GM12878 (cell line): ENCODE measurements at regions of chr15 and their contacts with region 1.

Region 1: GRCh38 chr15:81286621-81287121 is 37.3 kb downstream of the STARD5 start:
- DNase-seq: no peak
- ATAC-seq: peak; percentile 33
- H3K4me3 ChIP-seq: no peak overlapping the region
- H3K27ac ChIP-seq: peak overlapping the region; percentile 29; the same call in 1 of the 2 replicates
- H3K4me1 ChIP-seq: peaks cover 38% of the 10 kb centered on the region
- H3K27me3 ChIP-seq: no peaks in the 10 kb centered on the region
- CTCF ChIP-seq: no peak
- EP300 ChIP-seq: no peak
- POLR2A ChIP-seq: no peak
- RAD21 ChIP-seq: no peak

Region 2: DNA sequence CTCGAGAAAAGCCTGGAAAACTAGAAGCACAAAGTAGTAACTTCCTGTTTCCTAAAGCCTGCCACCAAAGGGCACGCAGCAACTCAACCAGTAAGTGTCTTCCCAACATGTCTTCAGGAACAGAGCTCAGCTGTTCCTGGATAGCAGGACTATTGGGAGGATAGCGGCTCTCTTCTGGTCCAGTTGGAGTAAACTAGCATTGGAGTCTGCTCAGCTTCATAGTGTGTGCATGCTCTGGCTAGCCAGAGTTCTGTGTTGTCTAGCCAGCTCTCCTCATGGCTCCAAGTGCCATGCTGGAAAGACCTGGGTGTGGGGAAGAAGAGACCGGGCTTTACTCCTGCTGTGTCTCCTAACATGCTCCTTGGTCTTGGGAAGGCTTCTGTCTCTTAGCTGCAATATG is 26.9 kb before region 1 on chr15:
- CTCF ChIA-PET with region 1: no interaction called
- POLR2A ChIA-PET with region 1: no interaction called
- RAD21 ChIA-PET with region 1: no interaction called
- SMC1A ChIA-PET with region 1: no interaction called
- in situ Hi-C with region 1: no loop called
- intact Hi-C with region 1: no loop called
- DNase-seq: no peak
- ATAC-seq: no peak
- H3K4me3 ChIP-seq: no peak overlapping the region
- H3K27ac ChIP-seq: no peak overlapping the region
- H3K4me1 ChIP-seq: no peaks in the 10 kb centered on the region
- H3K27me3 ChIP-seq: peaks cover 0 to 3% of the 10 kb centered on the region in 2 experiments; a peak in 2 of 4 replicates
- CTCF ChIP-seq: no peak
- EP300 ChIP-seq: no peak
- POLR2A ChIP-seq: no peak
- RAD21 ChIP-seq: no peak

Region 3: DNA sequence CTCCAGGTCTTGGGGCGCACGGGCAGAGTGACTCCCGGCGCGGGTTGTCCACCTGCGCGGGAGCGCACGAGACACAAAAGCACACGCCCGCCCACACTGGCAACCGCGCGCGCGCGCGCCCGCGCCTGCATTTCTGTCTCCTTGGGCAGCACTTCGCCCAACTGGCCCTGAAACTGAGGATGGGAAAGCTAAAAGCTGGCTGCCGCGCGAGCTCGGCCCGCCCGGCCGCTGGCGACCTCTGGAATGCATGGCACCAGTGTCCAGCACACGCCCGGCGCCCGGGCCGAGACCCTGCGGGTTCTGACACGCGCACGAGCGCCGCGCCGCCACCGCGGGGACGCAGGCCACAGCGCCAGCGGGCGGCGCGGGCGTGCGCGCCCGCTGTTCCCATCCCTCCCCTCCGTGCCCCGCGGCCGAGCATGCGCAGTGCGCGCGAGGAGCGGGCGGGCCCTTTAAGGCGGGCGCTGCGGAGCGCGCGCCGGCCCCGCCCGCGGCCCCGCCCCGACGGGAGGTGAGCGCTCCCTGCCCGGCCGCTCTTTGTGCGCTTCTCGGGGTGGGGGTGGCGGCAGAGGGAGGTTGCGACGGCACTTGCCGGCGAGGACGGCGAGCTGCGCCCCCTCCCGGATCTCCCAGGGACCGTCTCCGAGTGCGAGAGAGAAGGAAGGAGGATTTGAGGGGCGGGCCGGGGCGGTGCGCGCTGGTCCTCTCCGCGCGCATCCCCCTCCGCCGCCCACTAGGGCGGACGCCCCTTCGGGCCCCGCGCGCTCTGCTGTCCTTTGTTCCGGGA is 760.2 kb after region 1 on chr15:
- CTCF ChIA-PET with region 1: no interaction called
- POLR2A ChIA-PET with region 1: no interaction called
- RAD21 ChIA-PET with region 1: no interaction called
- SMC1A ChIA-PET with region 1: no interaction called
- in situ Hi-C with region 1: loop called (anchors 10 kb)
- intact Hi-C with region 1: loop called (anchors 10 kb)
- DNase-seq: no peak
- ATAC-seq: peak; percentile 77
- H3K4me3 ChIP-seq: peak overlapping the region; percentile 71
- H3K27ac ChIP-seq: peak overlapping the region; percentile 18; the same call in 1 of the 2 replicates
- H3K4me1 ChIP-seq: no peaks in the 10 kb centered on the region; the same call in 1 of the 2 replicates
- H3K27me3 ChIP-seq: peaks cover 4 to 8% of the 10 kb centered on the region in 2 experiments; a peak in 3 of 4 replicates
- CTCF ChIP-seq: peak; percentile 34 to 58 (median 51); a peak in 5 of 6 replicates
- EP300 ChIP-seq: no peak
- POLR2A ChIP-seq: no peak
- RAD21 ChIP-seq: peak; percentile 36; the same call in 1 of the 2 replicates